ENCODE measurements at regions of chr2 and their contacts with region 1.

Region 1: DNA sequence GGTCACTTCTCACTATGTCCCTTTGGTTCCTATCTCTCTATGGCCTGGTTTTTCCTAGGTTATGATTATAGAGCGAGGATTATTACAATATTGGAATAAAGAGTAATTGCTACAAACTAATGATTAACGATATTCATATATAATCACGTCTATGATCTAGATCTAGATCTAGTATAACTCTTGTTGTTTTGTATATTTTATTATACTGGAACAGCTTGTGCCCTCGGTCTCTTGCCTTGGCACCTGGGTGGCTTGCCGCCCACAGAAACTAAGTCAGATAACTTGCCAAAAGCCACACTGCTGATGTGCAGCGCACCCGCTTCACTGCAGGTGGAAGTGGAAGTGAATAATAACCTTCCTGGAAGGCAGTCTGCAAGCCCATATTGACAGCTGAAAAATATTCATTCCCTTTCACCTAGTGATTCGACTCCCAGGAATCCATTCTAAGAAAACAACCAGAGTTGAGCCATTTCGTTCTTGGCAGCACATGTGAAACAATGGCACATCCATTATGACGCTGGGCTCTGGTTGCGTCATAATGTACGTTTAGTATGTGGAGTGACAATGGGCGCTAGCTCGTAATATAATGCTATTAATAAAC is 725 bp upstream of the ANKRD53 start:
- DNase-seq: peak; percentile 24
- H3K4me3 ChIP-seq: peak overlapping the region; percentile 51
- H3K27me3 ChIP-seq: no peaks in the 10 kb centered on the region
- CTCF ChIP-seq: no peak

Region 2: GRCh38 chr2:70753902-70754301 is 223.8 kb before region 1 on chr2:
- CTCF ChIA-PET with region 1: no interaction called
- POLR2A ChIA-PET with region 1: no interaction called
- DNase-seq: no peak
- H3K4me3 ChIP-seq: no peak overlapping the region
- H3K27me3 ChIP-seq: no peaks in the 10 kb centered on the region; the same call in 1 of the 2 replicates
- CTCF ChIP-seq: no peak

Region 3: DNA sequence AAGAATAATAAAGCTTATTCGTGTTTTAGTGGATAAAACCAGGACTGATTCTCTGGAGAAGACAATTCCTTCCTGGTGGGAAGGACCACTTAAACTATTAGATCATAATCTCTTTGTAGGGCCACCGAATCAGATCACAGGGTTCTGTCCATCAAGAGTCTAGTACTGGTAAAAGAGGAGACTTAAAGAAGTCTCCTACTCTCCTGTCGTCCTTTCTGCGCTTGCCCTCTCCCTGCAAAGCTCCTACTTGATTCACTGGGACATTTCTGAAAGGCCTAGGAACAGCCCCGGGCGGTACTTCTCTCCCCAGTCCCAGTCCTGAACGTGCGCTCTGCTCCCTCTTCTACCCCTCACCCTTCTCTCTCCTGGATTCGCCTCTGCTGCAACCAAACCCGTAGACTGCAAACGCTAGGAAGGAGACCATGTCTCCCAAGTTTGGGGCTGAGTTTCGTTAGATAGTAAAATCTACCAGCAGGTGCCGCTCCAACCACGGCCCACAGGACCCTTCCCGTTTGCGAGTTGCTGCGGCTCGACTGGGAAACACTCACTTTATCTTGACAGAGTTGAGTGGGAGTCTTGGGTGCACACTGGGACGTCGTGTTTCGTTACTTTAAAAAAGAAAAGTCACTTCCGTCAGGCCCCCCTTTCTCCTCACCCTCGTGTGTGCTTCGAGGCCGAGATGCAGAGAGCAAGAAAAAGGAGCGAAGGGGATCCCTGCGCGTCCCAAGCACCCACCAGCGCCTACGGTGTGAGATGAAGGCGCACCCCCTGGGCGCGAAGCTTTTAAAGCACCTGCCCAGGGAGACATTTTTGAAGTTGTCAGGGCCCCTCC is 188.2 kb before region 1 on chr2:
- CTCF ChIA-PET with region 1: no interaction called
- POLR2A ChIA-PET with region 1: interaction called, 15 read pairs
- DNase-seq: no peak
- H3K4me3 ChIP-seq: no peak overlapping the region
- H3K27me3 ChIP-seq: peaks cover 24% of the 10 kb centered on the region
- CTCF ChIP-seq: peak; percentile 66

Region 4: DNA sequence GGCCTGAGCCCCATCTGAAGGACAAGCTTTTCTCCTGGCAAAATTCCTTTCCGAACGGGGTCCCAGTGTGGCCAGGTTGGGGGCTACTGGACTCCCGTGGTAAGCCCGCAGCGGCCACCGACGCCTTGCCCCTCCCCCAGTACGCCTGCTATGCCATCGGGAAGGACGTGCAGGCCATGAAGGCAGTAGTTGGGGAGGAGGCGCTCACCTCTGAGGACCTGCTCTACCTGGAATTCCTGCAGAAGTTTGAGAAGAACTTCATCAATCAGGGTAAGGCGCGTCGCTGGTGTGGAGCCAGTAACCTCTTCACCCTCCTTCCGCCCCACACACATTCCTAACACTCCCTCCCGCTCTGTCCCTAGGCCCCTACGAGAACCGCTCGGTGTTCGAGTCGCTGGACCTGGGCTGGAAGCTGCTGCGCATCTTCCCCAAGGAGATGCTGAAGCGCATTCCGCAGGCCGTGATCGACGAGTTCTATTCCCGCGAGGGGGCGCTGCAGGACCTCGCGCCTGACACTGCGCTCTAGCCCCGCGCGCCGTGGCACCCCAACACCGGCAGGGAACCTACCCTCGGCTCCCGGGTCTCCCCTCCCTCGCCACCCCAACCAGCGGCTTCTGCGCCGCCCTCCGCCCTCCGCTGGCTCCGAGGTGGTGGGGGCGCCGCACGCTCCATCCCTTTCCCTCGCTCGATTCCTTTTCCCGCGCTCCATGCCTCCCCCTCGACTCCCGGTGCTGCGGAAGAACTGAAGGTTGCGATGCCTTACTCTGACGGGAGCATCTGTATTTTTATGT is 12.9 kb before region 1 on chr2:
- CTCF ChIA-PET with region 1: interaction called, 44 read pairs
- POLR2A ChIA-PET with region 1: no interaction called
- DNase-seq: no peak
- H3K4me3 ChIP-seq: peak overlapping the region; percentile 37
- H3K27me3 ChIP-seq: peaks cover 1% of the 10 kb centered on the region; the same call in 1 of the 2 replicates
- CTCF ChIP-seq: peak; percentile 83

Measured in BJ (cell line).